Cardiac septum (tissue), 1 donor: ENCODE measurements at regions of chr3 and their contacts with region 1.

Region 1: GRCh38 chr3:185585859-185586685 is at the start of gene SENP2:
- DNase-seq: peak; percentile 100
- total RNA-seq, gene SENP2: 36.7 TPM

Region 2: GRCh38 chr3:185362850-185363661 is 223.0 kb before region 1 on chr3 and contains the start of gene MAP3K13:
- intact Hi-C with region 1: loop called (anchors 10 kb)
- DNase-seq: peak; percentile 86
- total RNA-seq, gene MAP3K13: 9.0 TPM

Region 3: GRCh38 chr3:185519021-185519420 is 67.1 kb before region 1 on chr3:
- intact Hi-C with region 1: no loop called
- DNase-seq: no peak